Head of caudate nucleus (tissue), 42 donors: ENCODE measurements at regions of chr10 and their contacts with region 1.

Region 1: DNA sequence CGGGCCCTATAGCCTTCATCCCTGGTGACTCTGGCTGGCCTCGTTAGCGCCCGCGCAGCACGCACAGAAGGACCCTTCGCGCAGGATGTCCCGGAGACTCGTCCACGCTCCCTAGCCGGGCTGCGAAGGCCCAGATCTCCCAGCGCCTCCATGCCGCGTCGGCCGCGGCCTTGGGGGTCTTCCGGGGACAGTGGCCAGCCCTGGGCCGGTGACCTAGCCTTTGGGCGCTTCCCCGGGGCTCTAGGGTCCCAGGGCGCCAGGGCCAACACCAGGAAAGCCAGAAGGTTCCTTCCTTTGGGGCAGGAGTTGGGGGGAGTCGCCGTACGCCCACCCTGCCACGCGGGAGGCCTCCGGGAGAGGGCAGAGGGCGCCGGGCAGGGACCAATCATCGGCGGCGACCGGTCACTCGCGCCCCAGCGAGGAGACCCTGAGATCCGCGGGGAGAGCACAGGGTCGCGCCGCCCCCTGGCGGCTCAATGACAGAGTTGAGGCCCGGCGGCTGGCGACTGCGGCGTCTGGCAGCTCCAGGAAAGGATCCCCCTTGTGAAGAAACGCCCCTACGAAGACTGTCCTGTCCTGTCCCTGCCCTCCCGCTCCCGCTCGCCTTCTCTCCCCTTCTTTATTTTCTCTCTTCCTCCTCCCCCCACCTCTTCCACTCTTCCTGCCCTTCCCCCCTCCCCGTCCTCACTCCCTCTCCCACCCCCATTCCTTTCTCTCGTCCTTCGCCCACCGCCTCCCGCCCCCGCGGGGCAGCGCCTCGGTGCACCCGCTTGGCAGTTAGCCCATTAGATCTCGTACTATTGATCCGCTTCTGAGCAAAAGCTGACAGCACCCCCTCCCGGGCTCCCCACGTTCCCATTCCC is 62.3 kb upstream of the LBX1 start:
- DNase-seq: peak; percentile 40 to 85 (median 70)

Region 2: DNA sequence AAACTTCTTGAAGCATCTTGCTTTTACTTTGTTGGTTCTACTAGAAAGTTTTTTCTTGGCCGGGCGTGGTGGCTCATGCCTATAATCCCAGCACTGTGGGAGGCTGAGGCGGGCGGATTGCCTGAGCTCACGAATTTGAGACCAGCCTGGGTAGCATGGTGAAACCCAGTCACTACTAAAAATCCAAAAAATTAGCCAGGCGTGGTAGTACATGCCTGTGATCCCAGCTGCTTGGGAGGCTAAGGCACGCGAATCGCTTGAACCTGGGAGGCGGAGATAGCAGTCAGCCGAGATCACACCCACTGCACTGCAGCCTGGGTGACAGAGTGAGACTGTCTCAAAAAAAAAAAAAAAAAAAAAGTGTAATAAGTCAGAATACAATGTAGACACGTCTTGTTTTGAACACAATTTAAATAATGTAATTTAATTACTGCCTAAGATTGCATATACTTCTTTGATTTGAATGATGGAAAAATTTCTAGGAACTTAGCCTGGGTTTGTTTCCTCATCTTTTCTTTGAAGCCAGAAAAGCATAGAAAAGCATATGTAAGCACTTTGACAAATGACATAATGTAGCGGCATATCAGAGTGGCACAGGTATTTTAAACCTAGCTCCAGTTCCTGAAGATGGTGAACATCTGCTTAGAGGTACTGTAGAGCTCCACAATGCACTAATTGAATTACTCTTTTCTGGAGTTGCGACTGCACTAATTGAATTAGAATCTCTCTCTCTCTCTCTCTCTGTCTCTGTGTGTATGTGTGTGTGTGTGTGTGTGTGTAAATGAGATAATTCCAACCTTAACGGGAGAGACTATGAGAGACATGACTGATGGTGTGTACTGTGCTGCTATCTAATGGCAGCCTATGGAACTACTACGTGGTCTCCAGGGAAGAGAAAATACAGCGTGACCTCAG is 150.2 kb after region 1 on chr10:
- intact Hi-C with region 1: loop called (anchors 10 kb)
- DNase-seq: peak in 38 of 42 donors; percentile 15 to 74 (median 42)

Region 3: GRCh38 chr10:101569838-101570766 is 278.5 kb after region 1 on chr10:
- intact Hi-C with region 1: loop called (anchors 5 kb)
- DNase-seq: peak; percentile 44 to 95 (median 84)